Activated CD8-positive, alpha-beta T cell treated with anti-CD3 and anti-CD28 coated beads for 36 hours (primary cell): ENCODE measurements at regions of chr15 and their contacts with region 1.

Region 1: DNA sequence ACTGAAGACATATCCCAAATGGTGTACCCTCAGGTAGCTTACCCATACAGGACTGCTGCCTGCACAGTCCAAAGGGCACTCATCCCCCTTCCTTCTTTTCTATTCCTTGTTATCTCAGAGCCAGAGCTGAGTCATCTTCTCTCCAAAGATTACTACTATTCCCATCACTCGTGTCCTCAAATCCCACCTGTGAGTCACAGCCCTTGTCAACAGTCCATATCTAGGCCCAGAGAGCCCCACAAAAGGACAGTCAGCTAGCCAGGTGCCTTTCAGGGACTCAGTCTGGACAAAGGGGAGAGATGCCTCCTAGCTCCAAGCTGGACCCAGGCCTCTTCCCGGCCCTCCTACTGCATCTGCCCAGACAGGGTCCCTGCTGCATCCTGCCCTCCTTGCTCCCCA is 11.0 kb downstream of the PARP16 start:
- DNase-seq: no peak
- ATAC-seq: peak; percentile 6
- H3K4me3 Mint-ChIP-seq: no peak overlapping the region
- H3K27ac Mint-ChIP-seq: peak overlapping the region; percentile 83
- H3K4me1 Mint-ChIP-seq: peaks cover 32% of the 10 kb centered on the region
- H3K27me3 Mint-ChIP-seq: no peaks in the 10 kb centered on the region
- CTCF ChIP-seq: no peak

Region 2: DNA sequence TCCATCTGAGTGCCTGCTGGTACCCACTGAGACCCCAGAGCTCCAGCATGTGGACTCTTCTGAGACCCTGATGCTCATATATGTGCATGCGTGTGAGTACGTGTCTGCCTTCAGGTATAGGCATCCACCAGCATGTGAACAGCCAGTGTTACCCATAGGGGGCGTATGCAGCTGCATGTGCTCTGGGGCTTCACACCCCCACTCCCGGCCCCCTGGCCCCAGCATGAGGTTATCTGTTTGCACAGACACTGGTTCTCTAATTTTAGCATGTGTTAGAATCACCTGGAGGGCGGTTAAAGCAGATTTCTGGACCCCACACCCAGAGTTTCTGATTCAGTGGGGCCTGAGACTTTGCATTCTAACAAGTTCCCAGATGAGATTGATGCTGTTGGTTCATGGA is 63.6 kb before region 1 on chr15:
- CTCF ChIA-PET with region 1: interaction called, 10 read pairs
- POLR2A ChIA-PET with region 1: no interaction called
- intact Hi-C with region 1: no loop called
- DNase-seq: peak; percentile 84
- ATAC-seq: peak; percentile 96
- H3K4me3 Mint-ChIP-seq: no peak overlapping the region
- H3K27ac Mint-ChIP-seq: no peak overlapping the region
- H3K4me1 Mint-ChIP-seq: peaks cover 5% of the 10 kb centered on the region
- H3K27me3 Mint-ChIP-seq: no peaks in the 10 kb centered on the region
- CTCF ChIP-seq: peak; percentile 61

Region 3: DNA sequence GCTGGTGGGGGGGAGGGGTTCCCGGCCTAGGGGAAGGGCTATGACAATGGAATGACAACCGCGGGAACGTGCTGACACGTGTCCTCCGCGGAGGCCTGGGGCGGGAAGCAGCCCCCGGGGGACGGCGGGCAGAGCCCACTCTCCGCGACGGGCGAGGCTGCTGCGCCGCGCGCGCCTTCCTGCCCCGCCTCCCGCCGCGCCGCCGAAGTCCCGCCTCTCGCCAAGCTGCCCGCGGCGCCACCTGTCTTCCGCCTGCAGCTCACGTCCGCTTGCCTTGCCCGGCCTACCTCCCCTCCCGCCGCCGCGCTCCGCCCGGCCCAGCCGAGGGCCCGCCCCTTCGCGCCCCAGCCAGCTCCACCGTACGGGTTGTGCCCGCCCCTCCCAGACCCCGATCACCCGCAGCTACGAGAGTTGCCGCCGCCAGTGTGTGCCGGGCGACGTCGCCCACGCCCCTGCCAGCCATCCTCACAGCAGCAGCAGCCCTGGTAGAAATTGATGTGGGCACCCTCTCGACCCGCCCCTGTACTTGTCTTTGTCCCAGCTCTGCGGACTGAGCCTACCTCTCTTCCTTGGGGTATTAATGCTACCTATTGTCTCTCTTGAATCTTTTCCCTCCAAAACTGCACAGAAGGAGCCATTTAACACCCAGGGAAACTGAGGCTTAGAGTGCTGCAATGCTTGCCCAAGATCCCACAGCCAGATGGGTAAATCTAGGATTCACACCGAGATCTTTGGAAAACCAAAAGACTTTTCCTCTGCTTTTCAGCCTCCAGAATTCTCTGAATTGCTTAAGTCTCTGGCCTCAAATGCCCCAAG is 11.2 kb after region 1 on chr15 and contains the start of gene PARP16:
- CTCF ChIA-PET with region 1: interaction called, 19 read pairs
- POLR2A ChIA-PET with region 1: interaction called, 9 read pairs
- intact Hi-C with region 1: no loop called
- DNase-seq: peak; percentile 94
- ATAC-seq: peak; percentile 98
- H3K4me3 Mint-ChIP-seq: peak within 1 kb of the TSS; percentile 87
- H3K27ac Mint-ChIP-seq: peak within 1 kb of the TSS; percentile 90
- H3K4me1 Mint-ChIP-seq: peaks cover 32% of the 10 kb centered on the region
- H3K27me3 Mint-ChIP-seq: no peaks in the 10 kb centered on the region
- CTCF ChIP-seq: no peak
- total RNA-seq, gene PARP16: 17.9 to 20.5 TPM